PC-9 (cell line): ENCODE measurements at regions of chr15 and their contacts with region 1.

Region 1: DNA sequence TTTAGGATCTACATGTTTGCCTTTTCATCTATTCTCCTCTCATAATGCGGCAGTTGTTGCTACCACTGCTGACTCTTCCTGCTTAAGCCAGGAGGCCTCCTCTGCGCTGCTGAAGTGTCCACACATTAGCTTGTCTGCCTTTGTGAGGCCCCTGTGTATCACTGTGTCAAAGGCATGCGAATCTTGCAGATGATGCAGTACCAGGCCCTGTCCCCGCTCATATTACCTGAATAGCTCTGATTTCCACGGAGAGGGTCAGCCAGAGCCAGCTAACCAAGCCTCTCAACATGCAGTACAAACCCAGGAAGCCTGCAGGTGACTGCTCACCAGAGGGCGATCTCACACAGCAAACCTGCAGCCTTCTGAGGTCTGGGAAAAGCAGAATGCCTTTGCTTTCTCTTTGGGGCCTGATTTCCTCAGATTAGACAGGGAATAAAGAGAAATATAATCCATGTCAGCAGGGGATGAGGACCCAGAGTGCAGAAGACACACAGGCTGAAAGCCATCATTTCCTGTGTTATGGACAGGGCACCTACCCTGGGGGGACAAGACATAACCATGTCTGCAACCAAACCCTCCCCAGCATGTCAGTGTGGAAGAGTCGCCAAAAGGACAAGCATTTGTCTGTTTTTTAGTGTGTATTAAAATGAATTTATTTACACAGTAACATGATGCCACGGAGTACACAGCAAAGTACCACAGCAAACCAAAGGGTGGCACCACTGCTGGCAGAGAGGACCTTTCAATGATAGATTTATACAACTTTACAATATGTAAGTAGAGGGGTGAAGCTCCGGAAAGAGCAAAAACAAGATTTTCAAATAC is 36.8 kb upstream of the TSPAN3 start:
- DNase-seq: peak in 1 of 2 experiments; percentile 60
- H3K4me3 ChIP-seq: no peak overlapping the region
- H3K27ac ChIP-seq: no peak overlapping the region
- H3K4me1 ChIP-seq: no peaks in the 10 kb centered on the region
- H3K27me3 ChIP-seq: no peaks in the 10 kb centered on the region
- CTCF ChIP-seq: peak; percentile 73

Region 2: DNA sequence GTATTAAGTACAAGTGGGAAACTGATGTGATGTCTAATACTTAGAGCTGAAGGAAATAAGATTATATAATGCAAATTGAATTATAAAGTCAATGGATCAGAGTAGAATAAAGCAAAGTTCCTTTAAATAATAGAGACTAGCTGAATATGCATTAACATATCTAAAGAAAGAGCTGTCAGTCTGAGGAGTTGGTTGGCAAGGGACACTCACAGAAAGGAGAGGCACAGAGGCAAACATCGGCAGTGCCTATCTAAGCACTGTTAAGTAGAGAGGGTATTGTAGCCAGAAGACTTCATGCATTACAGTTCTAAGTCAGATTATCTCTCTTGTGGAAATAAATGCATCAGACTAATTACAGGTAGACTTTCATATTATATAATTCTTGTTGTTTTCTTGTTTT is 1112.1 kb before region 1 on chr15:
- CTCF ChIA-PET with region 1: interaction called, 11 read pairs
- POLR2A ChIA-PET with region 1: no interaction called
- intact Hi-C with region 1: no loop called
- DNase-seq: no peak
- H3K4me3 ChIP-seq: no peak overlapping the region
- H3K27ac ChIP-seq: no peak overlapping the region
- H3K4me1 ChIP-seq: no peaks in the 10 kb centered on the region
- H3K27me3 ChIP-seq: no peaks in the 10 kb centered on the region
- CTCF ChIP-seq: no peak

Region 3: DNA sequence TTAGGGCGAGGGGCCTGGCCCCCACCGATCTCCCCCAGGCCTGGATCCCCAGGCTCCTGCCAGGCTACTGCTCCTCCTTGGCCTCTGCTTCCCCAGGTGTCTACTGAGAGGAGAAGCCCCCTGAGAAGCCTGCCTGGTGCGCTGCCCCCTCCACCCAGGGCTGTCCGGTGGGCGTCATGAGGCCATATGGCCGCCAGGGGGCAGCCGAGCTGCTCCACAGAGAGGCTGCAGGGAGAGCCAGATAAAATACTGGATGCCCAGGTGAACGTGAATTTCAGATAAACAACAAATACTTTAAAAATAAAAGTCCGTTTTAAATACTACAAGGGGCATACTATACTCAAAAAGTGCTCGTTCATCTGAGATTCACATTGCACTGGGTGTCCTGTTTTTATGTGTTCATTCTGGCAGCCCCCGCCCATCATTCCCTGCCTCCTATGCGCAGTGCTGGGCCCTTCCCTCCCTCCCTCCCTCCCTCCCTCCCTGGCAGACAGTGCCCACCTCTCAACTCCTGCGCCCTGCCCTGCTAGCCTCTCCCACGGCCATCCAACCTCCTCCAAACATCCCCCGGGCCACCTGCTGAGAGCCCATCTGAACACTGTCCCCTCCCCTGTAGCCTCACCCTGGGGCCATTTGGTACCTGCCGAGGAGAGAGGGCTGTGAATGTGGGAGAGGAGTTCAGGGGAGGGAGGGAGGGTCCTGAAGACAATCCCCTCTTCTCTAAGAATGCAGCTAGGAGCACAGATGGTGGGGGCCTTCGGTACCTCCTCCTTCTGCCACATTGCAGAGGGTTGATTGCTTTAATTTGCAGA is 83.3 kb before region 1 on chr15:
- CTCF ChIA-PET with region 1: no interaction called
- POLR2A ChIA-PET with region 1: no interaction called
- intact Hi-C with region 1: loop called (anchors 2 kb)
- DNase-seq: peak in 1 of 2 experiments; percentile 69
- H3K4me3 ChIP-seq: no peak overlapping the region
- H3K27ac ChIP-seq: no peak overlapping the region
- H3K4me1 ChIP-seq: no peaks in the 10 kb centered on the region
- H3K27me3 ChIP-seq: no peaks in the 10 kb centered on the region
- CTCF ChIP-seq: peak; percentile 98

Region 4: DNA sequence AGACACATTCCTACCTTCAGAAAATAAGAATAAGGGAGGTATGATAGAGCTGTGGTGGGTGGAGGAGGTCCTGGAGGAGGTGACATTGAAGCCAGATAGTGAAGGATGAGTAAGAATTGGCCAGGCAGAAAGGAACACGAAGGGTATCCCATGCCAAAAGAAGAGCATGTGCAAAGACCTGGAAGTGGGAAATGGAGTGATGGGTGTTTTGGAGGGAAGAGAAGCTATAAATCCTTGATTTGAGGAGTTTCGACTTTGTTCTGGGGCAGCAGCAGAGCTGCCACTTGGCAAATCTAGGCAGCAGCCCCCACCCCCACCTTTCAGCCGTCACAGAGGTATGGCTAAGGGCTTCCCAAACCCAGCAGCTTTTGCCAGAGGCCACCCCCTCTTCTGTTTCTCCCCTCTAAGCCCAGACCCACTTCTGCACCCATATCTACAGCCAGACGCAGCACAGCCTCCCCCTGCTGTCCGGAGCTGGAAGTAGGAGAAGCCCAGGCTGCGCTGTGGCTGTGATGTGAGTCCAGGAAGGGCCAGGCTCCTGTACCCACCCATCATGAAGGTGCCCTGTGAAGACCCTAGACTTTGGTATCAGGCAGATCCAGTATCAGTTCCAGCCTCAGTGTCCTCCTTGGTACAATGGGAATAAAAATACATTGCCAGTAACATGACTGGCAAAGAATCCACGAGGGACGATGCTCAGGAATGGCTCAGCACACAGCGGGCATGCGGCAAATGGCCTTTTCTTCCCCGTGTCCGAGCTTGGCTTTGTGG is 713.6 kb after region 1 on chr15:
- CTCF ChIA-PET with region 1: no interaction called
- POLR2A ChIA-PET with region 1: no interaction called
- intact Hi-C with region 1: loop called (anchors 1 kb)
- DNase-seq: peak in 1 of 2 experiments; percentile 52
- H3K4me3 ChIP-seq: no peak overlapping the region
- H3K27ac ChIP-seq: no peak overlapping the region
- H3K4me1 ChIP-seq: no peaks in the 10 kb centered on the region
- H3K27me3 ChIP-seq: peaks cover 43% of the 10 kb centered on the region
- CTCF ChIP-seq: peak; percentile 79